GM13976 (cell line): ENCODE measurements at regions of chr16 and their contacts with region 1.

Region 1: GRCh38 chr16:31354394-31355291 is at the start of gene ITGAX:
- DNase-seq: peak; percentile 88
- CTCF ChIP-seq: no peak

Region 2: DNA sequence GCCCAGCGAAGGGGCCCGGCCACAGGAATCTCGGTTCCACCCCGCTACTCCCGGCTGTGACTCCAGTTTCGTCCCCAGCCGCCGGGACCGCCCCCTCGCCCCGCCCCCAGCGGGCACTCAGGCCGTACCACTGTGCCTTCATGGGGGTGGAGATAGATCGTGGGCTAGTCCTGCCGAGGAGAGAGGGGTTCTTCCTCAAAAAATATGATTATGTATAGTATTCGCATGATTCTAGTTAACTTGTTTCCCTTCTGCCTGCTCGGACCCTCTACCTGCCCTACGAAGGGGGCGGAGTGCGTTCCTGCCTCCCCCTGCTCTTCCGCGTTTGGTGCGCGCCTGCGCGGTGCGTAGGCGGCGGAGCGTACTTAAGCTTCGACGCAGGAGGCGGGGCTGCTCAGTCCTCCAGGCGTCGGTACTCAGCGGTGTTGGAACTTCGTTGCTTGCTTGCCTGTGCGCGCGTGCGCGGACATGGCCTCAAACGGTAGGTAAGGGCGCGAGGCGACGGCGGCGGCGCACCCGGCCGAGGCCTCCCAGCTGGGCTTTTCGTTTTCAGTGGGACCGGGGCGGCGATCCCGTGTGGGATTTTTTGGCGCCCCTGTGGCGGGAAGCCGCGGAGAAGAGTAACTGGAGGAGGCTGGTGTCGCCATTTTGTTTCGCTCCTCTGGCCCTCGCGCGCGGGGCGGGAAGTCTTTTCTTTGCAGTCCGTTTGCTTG is 174.7 kb before region 1 on chr16 and contains the start of gene FUS:
- in situ Hi-C with region 1: loop called (anchors 25 kb)
- DNase-seq: peak; percentile 96
- CTCF ChIP-seq: no peak

Region 3: DNA sequence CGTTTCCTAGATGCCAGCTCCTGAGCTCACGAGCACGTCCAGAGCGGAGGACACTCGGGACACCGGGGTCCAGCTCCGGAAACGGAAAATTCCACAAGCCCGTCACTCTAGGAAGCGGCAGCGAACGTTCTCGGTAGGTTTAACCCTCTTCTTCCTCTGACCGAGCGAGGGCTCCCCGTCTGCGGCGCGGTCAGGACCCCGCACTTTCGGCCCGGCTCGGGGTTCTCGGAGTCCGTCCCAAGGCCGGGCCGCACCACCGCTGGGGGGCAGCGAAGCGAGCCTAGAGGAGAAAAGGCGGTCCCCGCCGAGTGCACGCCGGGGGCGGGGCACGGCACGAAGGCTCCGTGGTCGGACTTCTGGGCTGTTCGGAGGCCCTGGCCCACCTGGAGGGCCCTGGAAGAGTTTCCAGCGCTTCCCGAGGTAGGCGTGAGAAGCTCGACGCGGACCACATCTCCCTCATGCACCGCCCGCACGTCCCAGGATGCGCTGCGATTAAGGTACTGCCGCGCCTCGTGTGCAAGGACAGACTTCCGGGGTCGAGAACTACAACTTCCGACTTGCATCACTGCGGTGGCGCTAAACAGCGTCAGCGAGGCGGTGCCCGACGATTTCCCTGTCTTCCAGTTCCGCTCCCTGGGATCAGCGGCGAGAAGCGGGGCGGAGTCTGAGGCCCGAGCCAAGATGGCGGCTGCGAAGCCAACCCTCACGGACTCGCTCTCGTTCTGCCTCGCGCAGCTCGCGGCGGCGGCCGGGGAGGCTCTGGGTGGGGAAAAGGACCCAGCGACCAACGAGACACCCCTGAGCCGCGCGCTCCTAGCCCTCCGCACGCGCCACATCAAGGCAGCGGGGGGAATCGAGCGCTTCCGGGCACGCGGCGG is 104.4 kb after region 1 on chr16 and contains the start of gene ARMC5:
- in situ Hi-C with region 1: no loop called
- DNase-seq: peak; percentile 92
- CTCF ChIP-seq: peak; percentile 64